ENCODE measurements at regions of chr13 and their contacts with region 1.

Region 1: DNA sequence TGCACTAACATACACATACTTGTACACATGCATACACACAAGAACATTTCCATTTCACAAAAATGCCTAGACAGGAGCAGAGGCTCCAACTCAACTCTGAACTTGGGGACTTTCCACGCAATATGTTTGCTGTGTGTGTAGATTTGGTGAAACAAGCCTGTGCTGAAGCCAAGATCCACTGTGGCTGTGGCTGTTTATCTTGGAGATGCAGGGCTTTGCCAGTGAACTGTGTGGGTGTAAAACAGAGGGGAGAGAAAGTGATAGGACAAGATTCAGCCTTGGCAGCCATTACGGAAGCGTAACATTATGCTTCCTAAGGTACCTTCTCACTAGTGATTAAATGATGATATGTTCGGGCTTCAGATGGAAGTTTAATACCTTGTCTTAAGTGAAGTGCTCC is 73.2 kb upstream of the MBNL2 start:
- DNase-seq: peak; percentile 46
- H3K4me3 ChIP-seq: no peak overlapping the region
- H3K27ac ChIP-seq: peak overlapping the region; percentile 1 to 43
- H3K4me1 ChIP-seq: peaks cover 18% of the 10 kb centered on the region
- H3K27me3 ChIP-seq: no peaks in the 10 kb centered on the region
- CTCF ChIP-seq: no peak
- POLR2A ChIP-seq: no peak

Region 2: DNA sequence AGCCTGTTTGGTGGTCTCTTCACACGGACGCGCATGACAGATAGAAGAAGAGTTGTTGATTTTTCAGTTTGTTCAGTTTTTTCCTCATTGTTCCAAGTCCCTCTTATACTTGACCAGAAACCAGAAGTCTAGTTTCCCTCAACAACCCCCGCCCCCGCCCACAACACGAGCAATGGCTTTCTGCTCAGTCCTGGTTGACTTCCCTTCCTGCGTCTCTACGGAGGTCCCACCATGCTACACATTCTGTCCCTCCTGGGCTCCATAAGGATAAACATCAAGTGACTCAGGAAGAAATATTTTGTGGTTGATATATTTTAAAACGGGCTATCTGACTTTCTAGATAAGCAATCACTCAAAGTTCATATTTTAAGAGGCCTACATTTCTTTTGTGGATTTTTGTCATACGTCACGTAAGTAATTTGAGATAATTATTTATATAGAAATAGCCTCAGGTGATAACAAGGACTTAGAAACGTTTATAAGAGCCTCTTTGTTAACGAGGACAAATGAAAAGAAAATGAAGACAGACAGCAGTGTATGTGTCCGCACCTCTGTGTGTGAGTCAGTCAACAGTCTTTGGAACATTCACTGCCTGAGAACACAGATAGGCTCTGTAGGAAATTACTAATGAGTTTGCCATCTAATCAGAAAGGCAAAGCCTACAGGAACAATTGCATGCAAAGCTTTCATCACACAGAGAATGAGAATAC is 499.4 kb after region 1 on chr13:
- intact Hi-C with region 1: no loop called
- DNase-seq: no peak
- H3K4me3 ChIP-seq: no peak overlapping the region
- H3K27ac ChIP-seq: no peak overlapping the region
- H3K4me1 ChIP-seq: no peaks in the 10 kb centered on the region
- H3K27me3 ChIP-seq: no peaks in the 10 kb centered on the region
- CTCF ChIP-seq: no peak
- POLR2A ChIP-seq: no peak

Region 3: GRCh38 chr13:97726664-97727280 is 577.9 kb after region 1 on chr13:
- intact Hi-C with region 1: loop called (anchors 10 kb)
- DNase-seq: no peak
- H3K4me3 ChIP-seq: no peak overlapping the region
- H3K27ac ChIP-seq: no peak overlapping the region
- H3K4me1 ChIP-seq: no peaks in the 10 kb centered on the region
- H3K27me3 ChIP-seq: no peaks in the 10 kb centered on the region
- CTCF ChIP-seq: no peak
- POLR2A ChIP-seq: no peak